HEK293 (cell line): ENCODE measurements at regions of chr9 and their contacts with region 1.

Region 1: GRCh38 chr9:16154521-16155078 is 601.8 kb downstream of the CCDC171 start:
- H3K4me3 ChIP-seq: peak overlapping the region; percentile 20
- H3K27ac ChIP-seq: no peak overlapping the region
- H3K4me1 ChIP-seq: no peaks in the 10 kb centered on the region
- CTCF ChIP-seq: peak; percentile 58; the same call in 1 of the 2 replicates

Region 2: DNA sequence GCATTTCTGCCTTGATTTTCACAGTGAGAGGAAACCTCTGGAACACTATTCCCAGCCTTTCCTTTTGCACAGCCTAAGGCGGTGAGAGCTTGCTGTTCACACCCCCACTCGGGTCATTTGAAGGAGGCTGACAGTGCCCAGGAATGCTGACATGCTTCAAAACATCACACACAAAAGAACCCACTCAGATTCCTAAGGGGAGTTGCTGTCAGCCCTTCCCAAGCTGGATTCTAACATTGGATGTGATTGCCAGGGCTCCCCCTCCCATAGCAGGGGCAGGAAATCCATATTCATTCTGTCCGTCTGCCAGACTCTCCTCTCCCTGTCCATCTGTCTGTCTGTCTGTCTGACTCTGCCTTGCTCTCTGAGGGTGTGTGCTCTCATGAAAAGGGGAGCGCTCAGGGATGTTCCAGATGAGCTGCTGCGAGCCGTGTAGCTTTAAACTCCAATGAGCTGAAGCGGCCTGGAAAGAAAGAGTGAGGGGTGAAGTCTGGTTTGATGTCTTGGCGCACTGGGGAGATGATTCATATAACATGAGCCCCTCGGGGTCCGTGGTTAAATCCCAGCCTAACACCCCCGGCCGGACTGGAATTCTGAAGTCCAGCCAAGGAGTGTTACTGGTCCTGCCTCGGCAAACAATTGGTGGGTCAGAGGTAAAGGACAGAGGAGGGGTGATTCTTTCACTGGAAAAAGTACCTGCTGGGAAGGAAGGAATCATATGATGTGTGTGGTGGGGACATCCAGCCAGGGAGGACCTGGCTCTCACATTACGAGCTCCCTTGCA is 84.7 kb before region 1 on chr9:
- CTCF ChIA-PET with region 1: no interaction called
- POLR2A ChIA-PET with region 1: no interaction called
- H3K4me3 ChIP-seq: no peak overlapping the region
- H3K27ac ChIP-seq: no peak overlapping the region
- H3K4me1 ChIP-seq: no peaks in the 10 kb centered on the region
- CTCF ChIP-seq: no peak

Region 3: GRCh38 chr9:16138561-16139491 is 15.8 kb before region 1 on chr9:
- CTCF ChIA-PET with region 1: interaction called, 22 read pairs
- POLR2A ChIA-PET with region 1: no interaction called
- H3K4me3 ChIP-seq: no peak overlapping the region
- H3K27ac ChIP-seq: no peak overlapping the region
- H3K4me1 ChIP-seq: no peaks in the 10 kb centered on the region
- CTCF ChIP-seq: no peak

Region 4: GRCh38 chr9:16213781-16214515 is 59.3 kb after region 1 on chr9:
- CTCF ChIA-PET with region 1: no interaction called
- POLR2A ChIA-PET with region 1: no interaction called
- H3K4me3 ChIP-seq: no peak overlapping the region
- H3K27ac ChIP-seq: no peak overlapping the region
- H3K4me1 ChIP-seq: no peaks in the 10 kb centered on the region
- CTCF ChIP-seq: no peak